Heart right ventricle (tissue), 16 donors: ENCODE measurements at regions of chr1 and their contacts with region 1.

Region 1: DNA sequence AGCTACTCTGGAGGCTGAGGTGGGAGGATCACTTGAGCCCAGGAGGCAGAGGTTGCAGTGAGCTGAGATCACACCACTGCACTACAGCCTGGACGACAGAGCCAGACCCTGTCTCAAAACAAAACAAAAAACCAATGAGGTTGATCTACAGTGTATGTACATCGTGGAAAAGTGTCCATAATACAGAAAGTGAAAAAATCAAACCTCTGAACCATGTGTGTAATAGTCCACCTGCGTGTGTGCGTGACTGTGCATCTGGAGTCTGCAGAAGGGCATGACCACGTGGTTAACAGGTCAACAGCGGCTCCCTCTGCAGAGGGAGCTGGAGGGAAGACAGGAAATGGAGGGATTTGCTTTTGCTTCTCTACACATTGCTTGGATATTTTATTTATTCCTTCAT is 32.4 kb upstream of the ENO1 start:
- DNase-seq: no peak
- ATAC-seq: no peak
- H3K4me3 ChIP-seq: no peak overlapping the region
- H3K27ac ChIP-seq: no peak overlapping the region
- H3K4me1 ChIP-seq: peaks cover 0 to 10% (median 0%) of the 10 kb centered on the region in 9 donors
- H3K27me3 ChIP-seq: peaks cover 0 to 6% (median 0%) of the 10 kb centered on the region in 7 donors
- CTCF ChIP-seq: no peak

Region 2: DNA sequence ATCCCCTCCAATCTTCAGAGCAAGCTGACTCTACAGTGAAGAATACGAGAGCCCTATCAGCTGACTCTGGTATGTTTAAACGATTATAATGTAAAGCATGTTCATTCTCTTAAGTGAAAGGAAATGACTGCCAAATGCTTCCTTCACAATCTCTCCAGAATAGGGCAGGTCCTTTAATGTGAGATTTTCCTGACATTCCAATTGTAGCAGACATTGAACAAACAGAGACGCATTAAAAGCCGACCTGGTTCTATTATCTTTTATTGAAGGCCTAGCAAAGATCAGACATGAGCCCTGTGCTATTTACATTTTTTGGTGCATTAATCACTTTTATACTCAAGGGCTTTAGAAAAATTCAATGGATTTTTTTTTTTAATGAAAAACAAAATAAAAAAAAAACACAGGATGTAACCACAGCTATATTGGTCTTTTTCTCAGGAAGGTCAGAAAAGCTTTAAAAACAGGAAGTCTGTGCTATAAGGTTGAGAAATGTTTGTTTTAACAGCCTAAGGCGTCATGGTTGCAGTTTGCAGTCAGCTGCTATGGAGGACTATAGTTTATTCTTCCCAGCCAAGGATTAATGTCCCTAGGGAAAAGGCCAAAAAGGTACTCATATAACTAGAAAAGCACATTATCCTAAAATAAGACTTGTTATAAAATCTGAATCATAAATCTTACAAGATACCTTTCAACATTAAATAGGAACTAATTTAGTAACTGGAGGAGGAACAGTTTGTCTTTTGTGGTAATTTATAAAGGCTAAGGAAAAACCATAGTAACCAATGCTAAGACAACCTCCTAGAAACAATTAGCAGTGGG is 198.3 kb before region 1 on chr1:
- intact Hi-C with region 1: no loop called
- DNase-seq: no peak
- ATAC-seq: peak in 7 of 8 donors; percentile 33 to 75 (median 68)
- H3K4me3 ChIP-seq: peak overlapping the region in 5 of 10 donors; percentile 3 to 22 (median 11)
- H3K27ac ChIP-seq: peak overlapping the region in 9 of 10 donors; percentile 18 to 77 (median 55)
- H3K4me1 ChIP-seq: peaks cover 0 to 34% (median 26%) of the 10 kb centered on the region in 9 donors
- H3K27me3 ChIP-seq: no peaks in the 10 kb centered on the region
- CTCF ChIP-seq: no peak

Region 3: DNA sequence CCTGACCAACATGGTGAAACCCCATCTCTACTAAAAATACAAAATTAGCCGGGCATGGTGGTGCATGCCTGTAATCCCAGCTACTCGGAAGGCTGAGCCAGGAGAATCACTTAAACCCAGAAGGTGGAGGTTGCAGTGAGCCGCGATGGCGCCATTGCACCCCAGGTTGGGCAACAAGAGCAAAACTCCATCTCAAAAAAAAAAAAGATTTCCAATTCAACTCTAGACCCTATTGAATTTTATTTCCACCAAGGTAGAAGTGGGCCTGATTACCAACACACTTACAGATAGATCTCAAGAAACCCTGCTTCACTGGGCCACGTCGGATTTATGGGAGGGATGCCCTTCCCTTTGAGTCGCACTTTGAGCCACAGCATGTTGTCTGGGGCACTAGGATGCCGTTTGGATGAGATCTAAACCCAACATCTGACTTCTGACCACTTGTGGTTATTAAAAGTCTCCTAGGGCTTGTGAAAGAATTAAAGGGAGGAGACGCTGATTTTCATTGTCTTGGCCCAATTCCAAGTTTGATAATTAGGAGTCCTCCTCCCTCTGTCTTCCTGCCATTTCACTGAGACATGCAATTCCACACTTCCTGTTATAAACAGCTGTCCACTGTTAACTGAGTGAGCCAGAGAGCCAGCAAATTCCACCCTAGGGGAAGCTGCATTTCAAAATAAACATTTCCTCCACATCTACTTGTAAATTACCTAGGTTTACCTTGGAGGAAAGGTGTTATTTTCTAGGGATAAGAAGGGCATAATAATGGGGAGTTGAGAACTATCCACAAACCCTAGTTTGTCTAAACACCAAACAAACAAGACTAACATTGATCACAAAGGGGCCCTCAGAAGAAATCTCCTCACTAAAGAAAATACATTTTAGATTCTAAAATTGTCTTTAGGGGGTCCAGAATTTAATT is 88.3 kb before region 1 on chr1:
- intact Hi-C with region 1: no loop called
- DNase-seq: peak in 1 of 2 donors; percentile 51
- ATAC-seq: peak in 7 of 8 donors; percentile 62 to 83 (median 77)
- H3K4me3 ChIP-seq: no peak overlapping the region
- H3K27ac ChIP-seq: peak overlapping the region in 9 of 10 donors; percentile 11 to 70 (median 41)
- H3K4me1 ChIP-seq: peaks cover 0 to 43% (median 28%) of the 10 kb centered on the region in 9 donors
- H3K27me3 ChIP-seq: no peaks in the 10 kb centered on the region
- CTCF ChIP-seq: no peak

Region 4: GRCh38 chr1:8970870-8971337 is 60.0 kb after region 1 on chr1:
- intact Hi-C with region 1: no loop called
- DNase-seq: no peak
- ATAC-seq: no peak
- H3K4me3 ChIP-seq: peak overlapping the region in 1 of 10 donors; percentile 23
- H3K27ac ChIP-seq: no peak overlapping the region
- H3K4me1 ChIP-seq: peaks cover 0 to 3% (median 0%) of the 10 kb centered on the region in 9 donors
- H3K27me3 ChIP-seq: no peaks in the 10 kb centered on the region
- CTCF ChIP-seq: no peak

Region 5: DNA sequence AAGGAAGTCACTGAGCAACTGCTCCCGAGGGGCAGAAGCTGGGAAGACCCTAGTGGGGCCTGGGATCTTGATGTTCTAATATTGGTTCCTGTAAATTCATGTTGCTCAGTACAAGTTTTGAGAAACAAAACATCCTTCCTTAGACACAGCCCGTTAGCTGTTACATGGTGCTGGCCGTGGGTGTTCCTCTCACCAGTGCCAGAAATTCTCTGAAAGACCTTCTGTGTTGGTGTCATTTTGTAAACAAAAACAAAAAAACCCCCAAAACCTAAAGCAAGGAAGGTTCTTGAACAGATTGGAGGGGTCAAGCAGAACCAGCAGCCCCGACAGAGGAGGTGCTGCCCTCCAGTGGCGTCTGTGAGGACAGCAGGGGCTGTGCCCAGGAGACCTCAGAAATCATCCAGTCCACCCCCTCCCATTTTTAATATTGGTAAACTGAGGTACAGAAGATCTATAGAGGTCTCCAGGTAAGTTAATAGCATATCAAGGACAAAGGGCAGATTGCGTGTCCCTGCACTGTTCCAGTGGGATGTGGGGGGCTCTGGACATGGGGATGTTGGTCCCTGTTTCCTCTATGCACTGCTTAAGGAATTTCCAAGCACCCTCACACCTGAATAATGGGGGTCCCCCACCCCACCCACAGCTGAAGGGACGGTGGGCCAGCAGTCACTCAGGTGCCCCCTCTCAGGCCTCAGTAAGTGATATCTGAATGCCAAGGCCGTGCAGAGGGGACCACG is 77.1 kb after region 1 on chr1:
- intact Hi-C with region 1: loop called in 1 of 10 experiments (anchors 5 kb)
- DNase-seq: peak; percentile 31 to 66
- ATAC-seq: peak in 7 of 8 donors; percentile 61 to 79 (median 70)
- H3K4me3 ChIP-seq: no peak overlapping the region
- H3K27ac ChIP-seq: peak overlapping the region in 1 of 10 donors; percentile 74
- H3K4me1 ChIP-seq: peaks cover 0 to 25% (median 8%) of the 10 kb centered on the region in 9 donors
- H3K27me3 ChIP-seq: no peaks in the 10 kb centered on the region
- CTCF ChIP-seq: peak; percentile 78 to 96 (median 92)

Region 6: DNA sequence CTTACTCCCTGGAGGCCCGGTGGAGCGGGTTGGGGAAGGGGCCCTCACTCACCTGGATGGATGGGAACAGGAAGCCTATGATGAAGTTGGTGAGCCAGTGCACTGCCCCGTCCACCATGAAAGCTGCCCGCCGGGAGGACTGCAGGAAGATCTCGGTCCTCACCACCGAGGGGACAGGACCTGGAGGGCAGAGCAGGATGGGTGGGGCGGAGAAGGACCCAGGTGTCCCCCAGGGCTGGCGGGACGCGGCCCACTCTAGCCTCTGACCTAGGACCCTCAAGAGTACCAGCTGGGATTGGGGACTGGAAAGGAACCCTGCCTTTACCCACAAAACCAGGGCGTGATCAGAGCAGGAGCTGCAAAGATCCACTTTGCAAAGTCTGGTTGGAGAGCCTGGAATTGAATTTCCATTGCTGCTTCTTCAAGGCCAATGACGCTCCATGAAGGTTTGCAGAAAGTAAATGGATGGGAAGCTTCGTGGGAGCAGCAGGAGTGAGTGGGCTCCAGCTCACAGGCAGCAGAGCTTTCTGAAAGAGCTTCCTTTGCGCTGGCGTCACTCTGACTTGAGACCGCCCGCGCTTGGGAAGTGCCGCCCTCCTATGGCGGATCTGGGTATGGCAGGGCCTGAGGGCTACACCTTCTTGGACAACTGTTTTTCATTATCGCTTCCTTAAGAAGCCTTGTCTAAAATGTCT is 93.9 kb after region 1 on chr1:
- intact Hi-C with region 1: loop called in 6 of 10 experiments (anchors 5 kb)
- DNase-seq: peak; percentile 71 to 82
- ATAC-seq: peak; percentile 7 to 88 (median 81)
- H3K4me3 ChIP-seq: no peak overlapping the region
- H3K27ac ChIP-seq: no peak overlapping the region
- H3K4me1 ChIP-seq: peaks cover 0 to 8% (median 0%) of the 10 kb centered on the region in 9 donors
- H3K27me3 ChIP-seq: no peaks in the 10 kb centered on the region
- CTCF ChIP-seq: peak; percentile 75 to 98 (median 96)

Region 7: DNA sequence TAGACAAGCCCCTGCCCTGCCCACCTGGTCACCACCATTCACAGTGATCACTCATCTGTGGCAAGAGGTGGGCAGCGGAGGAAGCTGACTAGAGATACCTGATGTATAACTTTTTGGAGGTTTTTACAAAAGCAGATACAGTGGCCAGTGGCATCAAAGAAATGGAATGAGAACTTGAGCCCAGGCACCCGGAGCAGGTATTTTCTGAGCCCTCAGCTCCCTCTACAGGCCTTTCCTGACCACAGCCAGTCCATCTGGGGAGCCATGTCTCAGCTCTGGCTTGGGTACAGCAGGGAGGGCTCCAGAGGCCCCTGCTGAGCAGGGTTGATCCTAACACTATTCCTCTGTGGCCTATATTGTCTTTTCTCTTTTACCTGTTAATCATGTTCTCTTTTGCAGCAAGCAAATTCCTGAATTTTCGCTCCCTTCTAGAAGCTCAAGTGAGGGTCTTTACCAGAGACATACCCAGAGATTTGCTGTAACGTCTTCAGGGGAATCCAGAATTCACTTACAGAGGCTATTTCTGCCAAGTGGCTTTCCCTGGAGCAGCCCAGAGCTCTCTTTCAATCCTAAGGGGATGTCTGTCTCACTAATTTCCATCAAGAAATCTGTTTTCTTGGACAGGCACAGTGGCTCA is 190.7 kb after region 1 on chr1:
- intact Hi-C with region 1: loop called in 3 of 10 experiments (anchors 5 kb)
- DNase-seq: peak in 1 of 2 donors; percentile 41
- ATAC-seq: peak in 6 of 8 donors; percentile 57 to 69 (median 64)
- H3K4me3 ChIP-seq: no peak overlapping the region
- H3K27ac ChIP-seq: no peak overlapping the region
- H3K4me1 ChIP-seq: peaks cover 0 to 11% (median 0%) of the 10 kb centered on the region in 9 donors
- H3K27me3 ChIP-seq: no peaks in the 10 kb centered on the region
- CTCF ChIP-seq: peak; percentile 29 to 75 (median 64)